H1 (cell line): ENCODE measurements at regions of chr19 and their contacts with region 1.

Region 1: DNA sequence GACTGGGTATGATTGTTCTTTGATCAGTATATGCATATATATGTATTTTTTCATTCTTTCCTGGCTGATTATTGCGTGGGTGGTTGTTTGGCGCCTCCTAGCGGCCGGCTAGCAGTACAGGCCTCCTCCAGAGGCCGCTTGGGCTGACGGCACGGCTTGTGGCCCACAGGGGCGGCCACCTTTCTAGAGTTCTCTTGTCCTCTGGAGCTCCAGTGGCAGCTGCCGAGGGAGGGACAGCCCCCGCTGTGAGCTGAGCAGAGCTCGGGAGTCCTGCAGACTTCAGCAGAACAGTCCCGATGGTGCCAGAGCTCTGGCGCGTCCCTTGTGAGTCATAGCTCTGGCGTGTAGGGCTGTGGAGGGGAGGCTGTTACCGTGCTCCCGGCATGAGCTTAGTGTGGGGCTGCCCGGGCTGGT is 22.5 kb upstream of the ZNF429 start:
- DNase-seq: peak; percentile 74 to 82
- H3K4me3 ChIP-seq: no peak overlapping the region
- H3K27ac ChIP-seq: no peak overlapping the region
- H3K4me1 ChIP-seq: no peaks in the 10 kb centered on the region
- H3K27me3 ChIP-seq: no peaks in the 10 kb centered on the region
- CTCF ChIP-seq: peak; percentile 80 to 85 (median 80)
- EP300 ChIP-seq: no peak
- POLR2A ChIP-seq: no peak
- RAD21 ChIP-seq: peak; percentile 86 to 91

Region 2: DNA sequence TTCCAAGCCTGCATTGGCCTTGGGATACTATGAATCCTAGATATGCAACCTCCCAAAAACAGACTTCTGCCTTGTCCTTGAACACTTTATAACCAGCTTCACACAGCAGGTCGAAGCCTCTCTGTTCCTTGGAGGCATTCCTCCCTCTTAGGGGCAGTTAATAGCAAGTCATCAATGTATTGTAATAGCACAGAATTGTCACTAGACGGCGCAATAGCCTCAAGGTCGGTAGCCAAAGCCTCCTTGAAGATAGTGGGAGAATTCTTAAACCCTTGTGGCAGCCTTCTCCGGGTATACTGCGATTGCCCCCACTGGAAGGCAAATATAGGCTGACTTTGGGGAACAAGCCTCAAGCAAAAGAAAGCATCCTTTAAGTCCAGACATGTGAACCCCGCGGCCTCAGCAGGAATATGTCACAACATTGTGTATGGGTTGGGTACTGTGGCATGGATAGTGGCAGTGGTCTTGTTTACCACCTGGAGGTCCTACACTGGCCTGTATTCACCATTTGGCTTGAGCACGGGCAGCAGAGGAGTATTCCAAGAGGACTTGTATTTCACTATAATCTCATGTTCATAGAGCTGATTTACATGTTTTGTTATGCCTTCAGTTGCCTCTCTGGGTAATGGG is 279.9 kb before region 1 on chr19:
- CTCF ChIA-PET with region 1: interaction called, 17 read pairs
- POLR2A ChIA-PET with region 1: no interaction called
- DNase-seq: peak; percentile 61 to 63
- H3K4me3 ChIP-seq: no peak overlapping the region
- H3K27ac ChIP-seq: no peak overlapping the region
- H3K4me1 ChIP-seq: peaks cover 0 to 4% (median 2%) of the 10 kb centered on the region in 4 experiments; a peak in 2 of 7 replicates
- H3K27me3 ChIP-seq: no peaks in the 10 kb centered on the region
- CTCF ChIP-seq: peak in 2 of 3 experiments; percentile 95 to 97; a peak in 3 of 4 replicates
- EP300 ChIP-seq: no peak
- POLR2A ChIP-seq: no peak
- RAD21 ChIP-seq: peak; percentile 98 to 99

Region 3: DNA sequence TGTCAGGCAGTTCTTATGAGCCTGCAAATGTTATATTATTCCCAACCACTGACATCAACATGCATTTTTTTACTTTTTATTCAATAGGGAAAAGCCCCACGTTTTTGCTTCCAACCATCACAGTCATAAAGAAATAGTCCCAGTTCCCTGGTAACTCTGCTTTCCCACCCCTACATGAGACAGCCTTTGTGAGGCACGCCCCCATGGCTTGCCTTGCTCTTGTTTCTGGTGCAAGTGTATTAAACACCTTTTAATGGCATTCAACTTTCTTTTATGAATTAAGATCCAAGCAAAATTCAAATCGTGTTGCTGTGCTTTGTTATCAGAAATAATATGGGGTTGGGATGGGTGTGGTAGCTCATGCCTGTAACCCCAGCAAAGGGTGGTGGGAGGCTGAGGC is 31.7 kb before region 1 on chr19:
- CTCF ChIA-PET with region 1: no interaction called
- POLR2A ChIA-PET with region 1: no interaction called
- DNase-seq: no peak
- H3K4me3 ChIP-seq: no peak overlapping the region
- H3K27ac ChIP-seq: no peak overlapping the region
- H3K4me1 ChIP-seq: no peaks in the 10 kb centered on the region
- H3K27me3 ChIP-seq: no peaks in the 10 kb centered on the region
- CTCF ChIP-seq: no peak
- EP300 ChIP-seq: no peak
- POLR2A ChIP-seq: no peak
- RAD21 ChIP-seq: no peak

Region 4: GRCh38 chr19:21468791-21469190 is 14.1 kb before region 1 on chr19:
- CTCF ChIA-PET with region 1: interaction called, 28 read pairs
- POLR2A ChIA-PET with region 1: interaction called, 16 read pairs
- DNase-seq: no peak
- H3K4me3 ChIP-seq: no peak overlapping the region
- H3K27ac ChIP-seq: no peak overlapping the region
- H3K4me1 ChIP-seq: no peaks in the 10 kb centered on the region
- H3K27me3 ChIP-seq: no peaks in the 10 kb centered on the region; a peak in 1 of 7 replicates
- CTCF ChIP-seq: peak; percentile 43 to 51 (median 47)
- EP300 ChIP-seq: no peak
- POLR2A ChIP-seq: no peak
- RAD21 ChIP-seq: peak; percentile 28 to 50

Region 5: GRCh38 chr19:21498651-21499050 is 15.8 kb after region 1 on chr19:
- CTCF ChIA-PET with region 1: interaction called, 22 read pairs
- POLR2A ChIA-PET with region 1: interaction called, 4 read pairs
- DNase-seq: no peak
- H3K4me3 ChIP-seq: no peak overlapping the region
- H3K27ac ChIP-seq: no peak overlapping the region
- H3K4me1 ChIP-seq: no peaks in the 10 kb centered on the region
- H3K27me3 ChIP-seq: no peaks in the 10 kb centered on the region
- CTCF ChIP-seq: no peak
- EP300 ChIP-seq: no peak
- POLR2A ChIP-seq: no peak
- RAD21 ChIP-seq: no peak

Region 6: GRCh38 chr19:21674454-21674853 is 191.6 kb after region 1 on chr19:
- CTCF ChIA-PET with region 1: interaction called, 10 read pairs
- POLR2A ChIA-PET with region 1: no interaction called
- DNase-seq: no peak
- H3K4me3 ChIP-seq: no peak overlapping the region
- H3K27ac ChIP-seq: no peak overlapping the region
- H3K4me1 ChIP-seq: no peaks in the 10 kb centered on the region; a peak in 1 of 7 replicates
- H3K27me3 ChIP-seq: no peaks in the 10 kb centered on the region
- CTCF ChIP-seq: no peak
- EP300 ChIP-seq: no peak
- POLR2A ChIP-seq: no peak
- RAD21 ChIP-seq: no peak

Region 7: GRCh38 chr19:21698215-21698614 is 215.3 kb after region 1 on chr19:
- CTCF ChIA-PET with region 1: interaction called, 22 read pairs
- POLR2A ChIA-PET with region 1: no interaction called
- DNase-seq: no peak
- H3K4me3 ChIP-seq: no peak overlapping the region
- H3K27ac ChIP-seq: no peak overlapping the region
- H3K4me1 ChIP-seq: peaks cover 0 to 11% (median 8%) of the 10 kb centered on the region in 4 experiments; a peak in 4 of 7 replicates
- H3K27me3 ChIP-seq: no peaks in the 10 kb centered on the region
- CTCF ChIP-seq: peak in 2 of 3 experiments; percentile 33 to 60; a peak in 2 of 4 replicates
- EP300 ChIP-seq: no peak
- POLR2A ChIP-seq: no peak
- RAD21 ChIP-seq: peak; percentile 71 to 76